ENCODE measurements at regions of chr3 and their contacts with region 1.

Region 1: GRCh38 chr3:132399054-132399929 is 18.0 kb upstream of the DNAJC13 start:
- DNase-seq: peak; percentile 45
- ATAC-seq: peak; percentile 73
- H3K4me3 Mint-ChIP-seq: no peak overlapping the region
- H3K27ac Mint-ChIP-seq: no peak overlapping the region
- H3K4me1 Mint-ChIP-seq: no peaks in the 10 kb centered on the region
- H3K27me3 Mint-ChIP-seq: no peaks in the 10 kb centered on the region
- CTCF ChIP-seq: peak; percentile 84

Region 2: DNA sequence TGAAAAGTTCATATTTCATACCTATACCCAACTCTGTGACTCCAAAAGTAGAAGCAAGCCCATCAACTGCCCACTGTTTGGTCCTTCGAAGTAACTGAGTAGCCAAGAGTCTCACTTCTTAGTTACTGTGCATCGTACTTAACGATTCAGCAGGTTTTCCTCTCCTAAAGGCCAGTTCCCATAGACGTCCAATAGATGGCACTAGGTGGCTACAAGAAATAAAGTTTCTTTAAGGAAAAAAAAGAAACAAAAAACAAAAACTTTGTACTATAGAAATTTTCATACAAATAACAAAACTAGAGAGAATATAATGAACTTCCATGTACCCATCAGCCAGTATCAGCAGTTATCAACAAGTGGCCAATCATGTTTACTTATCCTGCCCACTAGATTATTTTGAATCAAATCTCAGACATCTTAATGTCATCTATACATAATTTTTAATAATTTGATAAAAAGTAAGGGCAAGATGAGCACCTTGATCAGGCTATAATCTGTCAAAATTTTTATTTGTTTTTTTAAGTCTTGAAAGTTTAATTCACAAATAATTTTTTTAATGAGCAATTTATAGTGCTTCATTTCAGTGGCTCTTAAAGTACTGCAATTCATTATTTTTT is 145.9 kb before region 1 on chr3:
- CTCF ChIA-PET with region 1: interaction called, 8 read pairs
- POLR2A ChIA-PET with region 1: no interaction called
- intact Hi-C with region 1: loop called (anchors 2 kb)
- DNase-seq: peak; percentile 26
- ATAC-seq: peak; percentile 60
- H3K4me3 Mint-ChIP-seq: no peak overlapping the region
- H3K27ac Mint-ChIP-seq: no peak overlapping the region
- H3K4me1 Mint-ChIP-seq: no peaks in the 10 kb centered on the region
- H3K27me3 Mint-ChIP-seq: peaks cover 11% of the 10 kb centered on the region
- CTCF ChIP-seq: peak; percentile 72

Region 3: GRCh38 chr3:132352541-132353143 is 46.6 kb before region 1 on chr3:
- CTCF ChIA-PET with region 1: interaction called, 84 read pairs
- POLR2A ChIA-PET with region 1: no interaction called
- intact Hi-C with region 1: loop called (anchors 1 kb)
- DNase-seq: peak; percentile 83
- ATAC-seq: peak; percentile 96
- H3K4me3 Mint-ChIP-seq: no peak overlapping the region
- H3K27ac Mint-ChIP-seq: no peak overlapping the region
- H3K4me1 Mint-ChIP-seq: peaks cover 2% of the 10 kb centered on the region
- H3K27me3 Mint-ChIP-seq: peaks cover 1% of the 10 kb centered on the region
- CTCF ChIP-seq: peak; percentile 94

Measured in activated CD8-positive, alpha-beta T cell treated with anti-CD3 and anti-CD28 coated beads for 36 hours (primary cell).